GM23248 (cell line): ENCODE measurements at regions of chr12 and their contacts with region 1.

Region 1: GRCh38 chr12:91355150-91356006 is 172.8 kb upstream of the DCN start:
- DNase-seq: peak; percentile 89
- H3K4me3 ChIP-seq: no peak overlapping the region
- H3K27ac ChIP-seq: no peak overlapping the region
- H3K4me1 ChIP-seq: no peaks in the 10 kb centered on the region
- H3K27me3 ChIP-seq: no peaks in the 10 kb centered on the region

Region 2: DNA sequence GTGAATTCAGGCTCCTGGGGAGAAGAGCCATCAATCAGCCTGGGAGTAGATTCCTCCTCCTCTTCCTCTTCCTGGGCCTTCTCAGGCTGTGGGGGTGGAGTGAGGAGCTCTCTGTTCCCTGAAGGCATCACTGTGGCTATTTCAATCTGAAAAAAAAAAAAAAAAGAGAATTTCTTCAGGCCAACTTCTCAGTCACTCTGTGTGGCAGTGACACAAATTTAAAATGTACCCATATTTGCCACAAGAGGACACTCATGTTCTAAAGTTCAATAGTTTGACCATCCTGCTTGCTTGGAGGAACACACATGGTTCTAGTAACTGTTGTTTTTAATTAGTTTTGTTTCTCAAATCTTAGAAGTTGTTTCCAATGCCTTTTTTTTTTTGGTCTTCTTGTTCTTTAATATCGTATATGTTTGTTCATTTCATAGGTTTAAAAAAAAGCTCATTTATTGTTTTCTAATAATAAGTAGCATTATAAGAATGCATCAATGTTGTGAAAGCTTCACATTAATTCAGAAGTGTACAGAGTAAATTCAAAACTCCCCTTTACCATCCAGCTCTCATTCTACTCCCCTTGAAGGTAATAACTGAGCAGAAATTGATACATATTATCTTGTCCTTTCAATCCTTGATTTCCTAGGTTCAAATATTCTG is 377.1 kb before region 1 on chr12:
- in situ Hi-C with region 1: loop called (anchors 10 kb)
- DNase-seq: peak; percentile 79
- H3K4me3 ChIP-seq: no peak overlapping the region
- H3K27ac ChIP-seq: no peak overlapping the region
- H3K4me1 ChIP-seq: peaks cover 32% of the 10 kb centered on the region
- H3K27me3 ChIP-seq: no peaks in the 10 kb centered on the region

Region 3: DNA sequence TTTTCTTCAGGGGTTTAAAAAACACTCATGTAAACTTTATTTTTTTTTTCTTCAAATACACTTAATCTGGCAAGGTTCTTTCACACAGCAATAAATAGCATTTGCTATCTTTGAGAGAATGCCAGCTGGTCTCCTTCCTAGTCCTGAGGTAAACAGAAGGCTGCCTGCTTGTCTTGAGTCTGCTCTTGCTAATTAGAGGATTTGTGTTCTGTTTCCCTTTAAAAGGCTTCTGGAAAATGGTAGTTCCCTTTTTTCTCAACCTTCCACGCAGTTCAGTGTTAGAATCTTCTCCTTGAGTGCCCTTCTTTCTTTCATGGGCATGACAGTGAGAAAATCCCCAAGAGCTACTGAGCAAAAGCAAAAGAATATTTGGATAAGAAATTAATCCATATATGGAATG is 80.5 kb before region 1 on chr12:
- in situ Hi-C with region 1: no loop called
- DNase-seq: peak; percentile 20
- H3K4me3 ChIP-seq: no peak overlapping the region
- H3K27ac ChIP-seq: no peak overlapping the region
- H3K4me1 ChIP-seq: no peaks in the 10 kb centered on the region
- H3K27me3 ChIP-seq: no peaks in the 10 kb centered on the region